Breast epithelium (tissue), 4 donors: ENCODE measurements at regions of chr17 and their contacts with region 1.

Region 1: DNA sequence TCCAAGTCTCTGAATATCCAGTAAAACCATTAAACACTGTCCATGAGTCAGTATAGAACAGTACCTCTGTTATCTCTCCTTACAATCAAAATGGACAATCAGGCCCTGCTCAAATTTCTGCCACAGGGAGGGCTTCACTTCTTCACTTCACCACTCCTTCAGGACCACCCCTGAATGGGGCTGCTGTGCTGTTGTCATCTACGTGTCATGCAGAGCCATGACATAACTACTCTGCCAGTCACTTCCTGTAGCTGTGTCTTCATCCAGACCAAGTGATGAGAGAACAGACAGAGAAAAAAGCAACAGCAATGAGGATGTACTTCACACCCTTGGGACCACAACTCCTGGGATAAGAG is 116.9 kb downstream of the TANC2 start:
- DNase-seq: no peak
- H3K4me3 ChIP-seq: no peak overlapping the region
- H3K27ac ChIP-seq: no peak overlapping the region
- H3K4me1 ChIP-seq: no peaks in the 10 kb centered on the region
- H3K27me3 ChIP-seq: no peaks in the 10 kb centered on the region
- CTCF ChIP-seq: no peak
- POLR2A ChIP-seq: no peak

Region 2: GRCh38 chr17:62765351-62765750 is 317.6 kb before region 1 on chr17:
- intact Hi-C with region 1: no loop called
- DNase-seq: no peak
- H3K4me3 ChIP-seq: no peak overlapping the region
- H3K27ac ChIP-seq: no peak overlapping the region
- H3K4me1 ChIP-seq: no peaks in the 10 kb centered on the region
- H3K27me3 ChIP-seq: no peaks in the 10 kb centered on the region
- CTCF ChIP-seq: no peak
- POLR2A ChIP-seq: no peak

Region 3: DNA sequence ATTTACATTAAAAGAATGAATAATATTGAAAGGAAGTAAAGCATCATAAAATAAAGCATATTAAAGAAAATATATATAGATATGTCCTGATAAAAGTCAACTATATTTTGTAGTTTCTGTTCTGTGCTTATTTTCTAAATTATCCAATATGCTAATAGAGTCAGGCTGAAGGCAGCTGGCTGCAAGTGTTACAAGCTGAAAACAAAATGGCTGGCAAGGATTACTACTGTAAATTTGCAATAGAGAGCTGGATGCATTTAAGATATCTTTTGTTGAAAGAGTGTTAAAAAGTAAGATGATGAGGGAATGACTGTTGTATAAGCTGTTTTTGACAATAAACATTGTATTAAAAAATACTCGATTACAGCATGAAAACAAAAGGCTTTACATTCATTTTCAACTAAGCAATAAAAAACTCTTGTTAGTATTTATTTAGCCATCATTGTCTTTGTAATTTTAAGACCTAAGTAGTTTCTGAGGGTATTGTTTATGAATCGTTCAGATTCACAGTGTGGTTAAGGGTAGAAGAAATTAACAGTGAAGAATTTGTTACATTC is 40.6 kb before region 1 on chr17:
- intact Hi-C with region 1: no loop called
- DNase-seq: no peak
- H3K4me3 ChIP-seq: no peak overlapping the region
- H3K27ac ChIP-seq: no peak overlapping the region
- H3K4me1 ChIP-seq: no peaks in the 10 kb centered on the region
- H3K27me3 ChIP-seq: no peaks in the 10 kb centered on the region
- CTCF ChIP-seq: no peak
- POLR2A ChIP-seq: no peak

Region 4: GRCh38 chr17:63113183-63113582 is 30.2 kb after region 1 on chr17:
- intact Hi-C with region 1: loop called (anchors 1 kb)
- DNase-seq: no peak
- H3K4me3 ChIP-seq: no peak overlapping the region
- H3K27ac ChIP-seq: no peak overlapping the region
- H3K4me1 ChIP-seq: no peaks in the 10 kb centered on the region
- H3K27me3 ChIP-seq: no peaks in the 10 kb centered on the region
- CTCF ChIP-seq: no peak
- POLR2A ChIP-seq: no peak